ENCODE measurements at regions of chr5 and their contacts with region 1.

Region 1: DNA sequence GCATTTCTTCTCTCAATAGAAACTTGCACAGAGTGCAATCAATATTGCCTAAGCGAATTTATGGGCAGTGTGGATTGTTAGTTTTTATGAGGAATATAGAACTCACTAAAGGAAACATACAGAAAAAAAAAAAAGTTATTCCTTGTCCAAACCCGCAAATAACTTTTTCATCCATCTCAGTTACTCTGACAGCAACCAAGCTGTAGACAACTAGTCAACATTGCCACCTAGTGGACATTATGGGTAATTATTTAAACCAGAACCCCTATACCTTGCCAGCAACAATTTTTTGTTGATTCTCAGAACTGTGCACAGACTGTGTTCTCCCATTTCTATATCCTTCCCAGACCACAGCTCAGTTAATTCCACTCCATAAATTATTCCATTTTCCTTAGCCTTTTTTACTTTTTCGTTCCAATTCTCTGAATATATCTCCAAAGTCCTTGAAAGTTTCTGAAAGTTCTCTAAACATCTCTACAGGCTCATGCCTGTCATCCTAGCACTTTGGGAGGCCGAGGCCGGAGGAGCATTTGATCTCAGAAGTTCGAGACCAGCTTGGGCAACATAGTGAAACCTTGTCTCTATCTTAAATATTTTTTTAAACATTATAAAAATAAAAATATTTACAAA is 2.6 kb upstream of the AFAP1L1 start:
- DNase-seq: no peak

Region 2: GRCh38 chr5:149297340-149298041 is 28.4 kb after region 1 on chr5:
- intact Hi-C with region 1: loop called (anchors 2 kb)
- DNase-seq: no peak

Region 3: DNA sequence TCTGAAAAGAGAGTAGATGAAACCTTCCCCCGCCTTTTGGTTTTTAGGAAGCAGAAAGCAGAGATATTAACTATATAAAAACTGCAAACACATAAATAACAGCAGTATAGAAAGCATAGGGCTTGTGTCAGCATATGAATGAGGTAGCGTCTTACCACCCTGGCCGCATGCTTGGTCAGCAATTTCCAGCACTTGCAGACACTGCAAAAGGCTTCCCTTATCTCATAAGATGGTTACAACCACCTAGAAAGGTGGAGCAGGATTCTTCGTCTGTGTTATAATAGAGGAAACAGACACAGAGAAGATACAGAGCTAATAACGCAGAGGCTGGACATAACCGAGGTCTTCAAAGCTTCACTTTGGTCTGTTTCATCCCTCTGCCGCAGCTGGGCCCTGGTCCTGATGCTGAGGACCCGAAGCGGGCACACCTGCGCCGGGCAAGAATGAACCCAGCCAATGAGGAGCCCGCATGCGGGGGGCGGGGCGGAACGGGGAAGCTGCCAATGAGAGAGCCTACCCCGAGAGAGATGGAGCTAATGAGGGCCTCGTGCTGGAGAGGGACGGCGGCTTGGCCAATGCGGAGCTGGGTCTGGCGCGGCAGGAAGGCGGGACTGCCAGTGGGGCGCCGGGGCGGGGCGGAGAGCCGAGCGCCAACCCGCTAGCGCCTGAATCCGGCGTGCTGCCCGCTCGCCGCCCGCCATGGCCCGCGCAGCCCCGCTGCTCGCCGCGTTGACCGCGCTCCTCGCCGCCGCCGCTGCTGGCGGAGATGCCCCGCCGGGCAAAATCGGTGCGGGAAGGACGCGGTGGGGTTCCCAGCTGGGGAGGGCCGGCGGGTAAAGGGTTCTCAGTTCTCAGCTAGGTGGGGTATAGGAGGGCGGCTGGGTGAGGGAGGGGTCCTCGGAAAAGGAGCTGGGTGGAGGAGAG is 88.6 kb after region 1 on chr5 and contains the start of gene PCYOX1L:
- intact Hi-C with region 1: loop called (anchors 5 kb)
- DNase-seq: peak; percentile 98
- total RNA-seq, gene PCYOX1L: 4.3 TPM

Region 4: DNA sequence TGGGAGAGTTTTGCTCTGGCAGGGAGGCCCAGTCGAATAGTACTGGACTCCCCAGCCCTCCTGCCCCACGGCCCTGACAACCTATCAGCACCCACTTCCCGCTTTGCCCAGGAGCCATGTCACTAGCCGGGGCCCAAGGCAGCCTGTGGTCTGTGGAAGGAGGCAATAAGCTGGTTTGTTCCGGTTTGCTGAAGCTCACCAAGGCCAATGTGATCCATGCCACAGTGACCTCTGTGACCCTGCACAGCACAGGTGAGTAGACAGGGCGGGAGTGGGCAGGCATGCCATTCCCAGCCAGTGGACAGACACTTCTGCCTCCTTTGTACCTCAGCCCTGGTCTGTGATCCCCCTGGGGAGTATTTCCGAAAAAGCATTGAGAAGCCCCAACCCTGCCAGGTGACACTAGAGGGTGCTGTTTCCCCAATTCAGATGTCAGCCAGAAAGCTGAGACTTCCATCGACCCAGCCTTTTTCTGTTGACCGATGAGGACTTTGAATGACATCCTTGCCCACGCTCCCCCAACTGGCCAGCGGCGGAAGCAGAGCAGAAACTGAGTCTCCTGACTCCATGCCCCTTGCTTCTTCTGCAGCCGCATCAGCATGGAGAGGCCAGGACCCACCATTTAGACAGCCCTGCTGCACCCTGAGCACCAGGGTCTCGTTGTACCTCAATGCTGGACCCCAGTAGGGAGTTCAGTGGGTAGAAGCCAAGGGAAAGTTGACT is 98.4 kb after region 1 on chr5:
- intact Hi-C with region 1: loop called (anchors 5 kb)
- DNase-seq: no peak

Region 5: DNA sequence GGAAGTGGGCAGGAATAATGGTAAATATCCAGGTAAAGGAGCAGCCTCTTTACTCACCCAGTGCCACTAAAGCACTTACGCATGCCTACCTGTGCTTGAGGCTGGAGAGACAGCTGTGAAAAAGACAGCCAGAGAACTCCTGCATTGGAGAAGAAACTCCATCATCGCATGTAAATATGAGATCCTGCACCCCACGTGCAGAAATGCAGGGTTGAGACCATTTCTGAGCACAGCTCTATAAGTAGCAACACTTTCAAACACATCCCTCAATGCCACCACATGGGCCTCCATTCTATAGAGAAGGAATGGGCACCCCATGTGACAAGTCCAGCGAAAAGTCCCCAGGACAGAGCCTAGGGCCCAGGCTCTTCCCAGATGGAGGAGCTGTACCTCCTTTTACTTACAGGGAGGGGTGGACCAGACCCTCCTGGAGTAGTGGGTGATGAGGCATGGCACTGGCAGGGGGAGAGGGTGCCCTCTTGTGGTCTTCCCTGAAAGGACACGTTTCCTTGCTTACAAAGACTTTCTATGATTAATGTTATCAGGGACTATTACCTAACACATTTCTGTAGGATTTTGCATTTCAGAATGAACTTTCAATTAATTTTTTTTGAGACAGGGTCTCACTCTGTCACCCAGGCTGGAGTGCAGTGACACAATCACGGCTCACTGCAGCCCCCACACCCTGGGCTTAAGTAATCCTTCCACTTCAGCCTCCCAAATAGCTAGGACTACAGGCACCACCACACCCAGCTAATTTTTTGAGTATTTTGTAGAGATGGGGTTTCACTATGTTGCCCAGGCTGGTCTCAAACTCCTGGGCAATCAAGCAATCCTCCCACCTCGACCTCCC is 165.3 kb after region 1 on chr5:
- intact Hi-C with region 1: loop called (anchors 5 kb)
- DNase-seq: no peak

Measured in cardiac septum (tissue), 1 donor.